Endothelial cell of umbilical vein (primary cell): ENCODE measurements at regions of chr1 and their contacts with region 1.

Region 1: GRCh38 chr1:95043141-95043980 is 29.4 kb downstream of the ALG14 start:
- DNase-seq: peak; percentile 87
- H3K4me3 ChIP-seq: no peak overlapping the region
- H3K27ac ChIP-seq: no peak overlapping the region
- H3K4me1 ChIP-seq: no peaks in the 10 kb centered on the region
- H3K27me3 ChIP-seq: no peaks in the 10 kb centered on the region
- CTCF ChIP-seq: peak; percentile 92 to 98
- POLR2A ChIP-seq: no peak

Region 2: DNA sequence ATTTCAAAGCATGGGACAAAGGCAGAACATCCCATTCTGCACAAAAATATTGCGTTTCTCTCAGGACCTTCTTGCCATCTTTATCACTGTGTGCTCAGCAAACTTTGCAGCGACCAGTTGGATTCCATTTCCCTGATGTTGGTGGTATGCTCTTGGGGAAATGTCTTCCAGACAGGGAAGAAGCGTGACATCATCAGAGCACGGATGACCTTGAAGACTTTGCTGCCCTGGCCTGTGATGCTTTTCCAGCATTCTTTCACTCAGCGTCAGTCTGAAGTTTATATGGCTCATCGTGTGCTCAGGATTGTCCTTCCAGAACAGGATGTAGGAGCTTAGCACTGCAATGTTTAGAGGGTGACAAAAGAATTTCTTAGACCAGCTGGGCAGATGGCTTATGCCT is 370.4 kb before region 1 on chr1:
- CTCF ChIA-PET with region 1: no interaction called
- POLR2A ChIA-PET with region 1: no interaction called
- dilution Hi-C with region 1: no loop called
- intact Hi-C with region 1: no loop called
- DNase-seq: no peak
- H3K4me3 ChIP-seq: no peak overlapping the region
- H3K27ac ChIP-seq: no peak overlapping the region
- H3K4me1 ChIP-seq: no peaks in the 10 kb centered on the region
- H3K27me3 ChIP-seq: peaks cover 7 to 19% of the 10 kb centered on the region in 2 experiments
- CTCF ChIP-seq: no peak
- POLR2A ChIP-seq: no peak

Region 3: GRCh38 chr1:94805912-94806311 is 237.4 kb before region 1 on chr1:
- CTCF ChIA-PET with region 1: interaction called, 80 read pairs
- POLR2A ChIA-PET with region 1: no interaction called
- dilution Hi-C with region 1: no loop called
- intact Hi-C with region 1: loop called (anchors 1 kb)
- DNase-seq: peak; percentile 58
- H3K4me3 ChIP-seq: peak overlapping the region in 1 of 3 experiments; percentile 38
- H3K27ac ChIP-seq: no peak overlapping the region
- H3K4me1 ChIP-seq: peaks cover 30% of the 10 kb centered on the region
- H3K27me3 ChIP-seq: peaks cover under 1 to 6% of the 10 kb centered on the region in 2 experiments
- CTCF ChIP-seq: peak; percentile 82 to 87
- POLR2A ChIP-seq: no peak

Region 4: GRCh38 chr1:94846308-94846707 is 197.1 kb before region 1 on chr1:
- CTCF ChIA-PET with region 1: interaction called, 360 read pairs
- POLR2A ChIA-PET with region 1: no interaction called
- dilution Hi-C with region 1: no loop called
- intact Hi-C with region 1: no loop called
- DNase-seq: no peak
- H3K4me3 ChIP-seq: no peak overlapping the region
- H3K27ac ChIP-seq: no peak overlapping the region
- H3K4me1 ChIP-seq: peaks cover 4% of the 10 kb centered on the region
- H3K27me3 ChIP-seq: peaks cover 0 to 11% of the 10 kb centered on the region in 2 experiments
- CTCF ChIP-seq: no peak
- POLR2A ChIP-seq: no peak

Region 5: DNA sequence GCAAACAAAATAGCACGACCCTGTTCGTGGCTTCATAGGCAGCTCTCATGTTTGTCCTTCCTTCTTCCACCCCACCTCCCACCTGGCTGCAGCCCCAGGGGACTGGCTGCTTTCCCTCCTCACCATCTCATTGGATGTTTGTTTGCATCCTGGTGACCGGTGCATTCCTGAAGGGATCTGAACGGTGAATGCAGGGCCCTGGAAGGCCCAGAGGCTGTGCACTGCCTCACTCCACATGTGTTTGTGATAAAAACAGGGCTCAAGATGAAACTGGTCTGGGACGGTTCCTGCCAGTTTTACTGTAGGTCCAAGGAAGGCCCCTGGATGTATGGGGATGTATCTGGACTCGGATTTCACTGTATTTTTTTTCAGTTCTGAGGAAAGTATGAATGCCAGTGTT is 159.3 kb before region 1 on chr1:
- CTCF ChIA-PET with region 1: interaction called, 38 read pairs
- POLR2A ChIA-PET with region 1: no interaction called
- dilution Hi-C with region 1: no loop called
- intact Hi-C with region 1: no loop called
- DNase-seq: no peak
- H3K4me3 ChIP-seq: no peak overlapping the region
- H3K27ac ChIP-seq: no peak overlapping the region
- H3K4me1 ChIP-seq: peaks cover 3% of the 10 kb centered on the region
- H3K27me3 ChIP-seq: no peaks in the 10 kb centered on the region
- CTCF ChIP-seq: no peak
- POLR2A ChIP-seq: no peak

Region 6: DNA sequence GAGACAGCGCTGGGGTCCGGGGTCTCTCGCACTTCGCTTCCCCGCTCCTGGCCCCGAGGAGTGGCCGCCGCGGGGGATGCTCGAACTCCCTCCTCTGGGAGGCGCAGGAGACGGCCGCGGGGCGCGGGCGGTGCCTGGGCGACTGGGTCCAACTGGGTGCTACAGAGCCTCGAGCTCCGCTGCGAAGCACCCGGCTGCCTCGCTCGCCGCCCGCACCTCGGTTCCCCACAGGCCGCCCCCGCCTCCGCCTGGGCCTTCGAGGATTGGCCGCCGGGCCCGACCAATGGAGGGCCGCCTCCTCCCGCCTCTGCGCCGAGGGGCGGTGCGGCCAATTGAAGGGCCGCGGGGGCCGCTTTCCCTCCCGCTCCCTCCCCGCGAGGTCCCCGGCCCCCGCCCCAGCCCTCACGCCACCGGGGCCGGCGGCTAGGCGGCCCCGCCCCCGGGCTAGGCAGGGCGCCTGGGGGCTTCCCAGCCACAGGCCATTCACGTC is 116.4 kb before region 1 on chr1 and contains the start of gene CNN3:
- CTCF ChIA-PET with region 1: interaction called, 57 read pairs
- POLR2A ChIA-PET with region 1: interaction called, 3 read pairs
- dilution Hi-C with region 1: loop called (anchors 25 kb)
- intact Hi-C with region 1: loop called (anchors 1 kb)
- DNase-seq: peak; percentile 93
- H3K4me3 ChIP-seq: peak within 1 kb of the TSS; percentile 75 to 99 (median 90)
- H3K27ac ChIP-seq: peak within 1 kb of the TSS; percentile 100
- H3K4me1 ChIP-seq: peaks cover 49% of the 10 kb centered on the region
- H3K27me3 ChIP-seq: no peaks in the 10 kb centered on the region
- CTCF ChIP-seq: no peak
- POLR2A ChIP-seq: peak; percentile 93
- total RNA-seq, gene CNN3: 317 and 392 TPM in 2 replicates

Region 7: DNA sequence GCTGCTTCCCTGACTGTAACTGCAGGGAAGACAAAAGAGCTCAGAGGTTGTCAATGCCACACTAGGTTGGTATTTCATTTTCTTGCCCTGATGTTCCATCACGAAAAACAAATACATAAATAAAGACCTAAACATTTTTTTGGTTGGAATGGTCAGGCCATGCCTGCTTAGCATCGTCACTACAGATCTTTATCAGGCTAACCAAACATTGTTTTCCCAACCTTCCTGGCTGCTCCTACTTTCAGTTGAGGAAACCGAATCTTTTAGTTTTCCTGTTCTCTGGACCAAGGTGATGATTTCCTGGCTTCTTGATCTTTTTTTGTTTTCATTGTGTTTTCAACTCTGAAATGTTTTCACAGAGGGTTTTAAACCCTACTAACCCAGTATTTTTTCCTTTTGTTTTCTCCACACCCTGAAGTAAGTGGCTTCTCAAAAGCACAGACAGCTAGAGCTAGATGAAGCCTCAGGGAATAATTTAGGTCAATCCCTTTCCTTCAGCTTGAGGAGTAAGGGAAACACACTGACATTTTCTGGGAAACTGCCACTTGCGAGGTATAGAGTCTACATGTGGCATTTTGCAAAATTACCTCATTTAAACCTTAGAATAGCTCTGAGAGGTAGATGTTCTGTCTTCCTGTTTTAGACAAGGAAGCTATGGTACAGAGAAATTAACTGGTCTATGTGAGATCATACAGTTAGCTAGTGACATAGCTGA is 49.3 kb before region 1 on chr1:
- CTCF ChIA-PET with region 1: interaction called, 22 read pairs
- POLR2A ChIA-PET with region 1: no interaction called
- dilution Hi-C with region 1: no loop called
- intact Hi-C with region 1: no loop called
- DNase-seq: peak; percentile 64
- H3K4me3 ChIP-seq: no peak overlapping the region
- H3K27ac ChIP-seq: peak overlapping the region; percentile 30
- H3K4me1 ChIP-seq: peaks cover 25% of the 10 kb centered on the region
- H3K27me3 ChIP-seq: no peaks in the 10 kb centered on the region
- CTCF ChIP-seq: no peak
- POLR2A ChIP-seq: no peak

Region 8: GRCh38 chr1:95084317-95085176 is 41.2 kb after region 1 on chr1:
- CTCF ChIA-PET with region 1: no interaction called
- POLR2A ChIA-PET with region 1: no interaction called
- dilution Hi-C with region 1: no loop called
- intact Hi-C with region 1: no loop called
- DNase-seq: peak; percentile 39
- H3K4me3 ChIP-seq: no peak overlapping the region
- H3K27ac ChIP-seq: no peak overlapping the region
- H3K4me1 ChIP-seq: peaks cover 16% of the 10 kb centered on the region
- H3K27me3 ChIP-seq: peaks cover 9 to 17% of the 10 kb centered on the region in 2 experiments
- CTCF ChIP-seq: peak; percentile 59 to 60
- POLR2A ChIP-seq: no peak

Region 9: GRCh38 chr1:95233737-95234500 is 190.6 kb after region 1 on chr1 and contains the start of gene RWDD3:
- CTCF ChIA-PET with region 1: interaction called, 23 read pairs
- POLR2A ChIA-PET with region 1: no interaction called
- dilution Hi-C with region 1: no loop called
- intact Hi-C with region 1: loop called (anchors 1 kb)
- DNase-seq: peak; percentile 91
- H3K4me3 ChIP-seq: peak within 1 kb of the TSS; percentile 71 to 99 (median 78)
- H3K27ac ChIP-seq: peak within 1 kb of the TSS; percentile 62
- H3K4me1 ChIP-seq: peaks cover 8% of the 10 kb centered on the region
- H3K27me3 ChIP-seq: peaks cover 5 to 9% of the 10 kb centered on the region in 2 experiments
- CTCF ChIP-seq: peak; percentile 69 to 80
- POLR2A ChIP-seq: peak; percentile 87
- total RNA-seq, gene RWDD3: 12.1 and 14.4 TPM in 2 replicates

Region 10: DNA sequence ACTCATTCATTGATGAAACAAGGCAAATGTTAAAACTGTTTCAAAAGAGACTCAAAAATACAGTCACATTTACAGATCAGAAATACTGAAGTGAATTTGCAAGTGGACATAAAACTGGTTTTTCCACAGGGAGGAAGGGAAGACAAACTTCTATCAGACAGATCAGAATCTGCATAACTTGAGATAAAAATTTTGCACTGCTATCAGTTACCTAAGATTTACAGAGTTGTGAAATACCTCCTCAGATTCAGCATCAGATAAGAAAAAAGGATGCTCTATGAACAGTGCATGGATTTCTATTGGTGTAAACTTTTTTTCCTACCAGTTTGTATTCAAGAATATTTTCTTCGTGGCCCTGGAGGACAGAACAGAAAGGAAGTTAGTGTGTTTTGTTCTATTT is 766.0 kb after region 1 on chr1:
- CTCF ChIA-PET with region 1: no interaction called
- POLR2A ChIA-PET with region 1: no interaction called
- dilution Hi-C with region 1: no loop called
- intact Hi-C with region 1: no loop called
- DNase-seq: no peak
- H3K4me3 ChIP-seq: no peak overlapping the region
- H3K27ac ChIP-seq: no peak overlapping the region
- H3K4me1 ChIP-seq: no peaks in the 10 kb centered on the region
- H3K27me3 ChIP-seq: no peaks in the 10 kb centered on the region
- CTCF ChIP-seq: no peak
- POLR2A ChIP-seq: no peak